ENCODE measurements at regions of chr3 and their contacts with region 1.

Region 1: DNA sequence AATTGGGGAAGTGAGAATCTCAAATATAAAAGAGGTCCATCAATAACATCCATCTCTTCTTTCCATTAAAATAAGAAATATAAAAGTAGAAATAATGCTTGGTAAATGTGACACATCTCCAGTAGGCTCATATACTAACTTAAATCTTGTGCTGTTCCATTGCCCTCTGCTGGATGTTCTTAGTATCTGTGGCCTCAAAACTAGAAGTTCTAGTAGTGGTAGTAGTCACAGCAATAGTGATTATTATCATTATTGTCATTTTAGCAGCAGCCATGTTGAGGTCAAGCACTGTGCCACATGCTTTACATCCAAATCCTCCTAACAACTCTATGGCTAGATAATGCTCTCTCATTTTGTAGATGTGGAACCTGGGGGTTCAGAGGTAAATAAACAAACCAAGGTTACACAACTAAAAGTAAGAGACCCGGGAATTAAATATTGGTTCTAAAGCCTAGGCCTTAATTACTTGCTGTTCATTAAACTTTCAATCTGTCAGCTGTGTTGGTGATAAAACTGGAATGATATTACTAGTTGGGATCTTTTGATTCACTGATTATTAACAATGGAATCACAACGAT is 20.2 kb upstream of the BTLA start:
- DNase-seq: no peak
- H3K4me3 Mint-ChIP-seq: no peak overlapping the region
- H3K27ac Mint-ChIP-seq: no peak overlapping the region
- H3K4me1 Mint-ChIP-seq: peaks cover 27% of the 10 kb centered on the region
- H3K27me3 Mint-ChIP-seq: no peaks in the 10 kb centered on the region

Region 2: GRCh38 chr3:112111785-112112402 is 407.6 kb before region 1 on chr3:
- intact Hi-C with region 1: loop called (anchors 5 kb)
- DNase-seq: peak; percentile 53
- H3K4me3 Mint-ChIP-seq: no peak overlapping the region
- H3K27ac Mint-ChIP-seq: no peak overlapping the region
- H3K4me1 Mint-ChIP-seq: peaks cover 10% of the 10 kb centered on the region
- H3K27me3 Mint-ChIP-seq: no peaks in the 10 kb centered on the region

Region 3: DNA sequence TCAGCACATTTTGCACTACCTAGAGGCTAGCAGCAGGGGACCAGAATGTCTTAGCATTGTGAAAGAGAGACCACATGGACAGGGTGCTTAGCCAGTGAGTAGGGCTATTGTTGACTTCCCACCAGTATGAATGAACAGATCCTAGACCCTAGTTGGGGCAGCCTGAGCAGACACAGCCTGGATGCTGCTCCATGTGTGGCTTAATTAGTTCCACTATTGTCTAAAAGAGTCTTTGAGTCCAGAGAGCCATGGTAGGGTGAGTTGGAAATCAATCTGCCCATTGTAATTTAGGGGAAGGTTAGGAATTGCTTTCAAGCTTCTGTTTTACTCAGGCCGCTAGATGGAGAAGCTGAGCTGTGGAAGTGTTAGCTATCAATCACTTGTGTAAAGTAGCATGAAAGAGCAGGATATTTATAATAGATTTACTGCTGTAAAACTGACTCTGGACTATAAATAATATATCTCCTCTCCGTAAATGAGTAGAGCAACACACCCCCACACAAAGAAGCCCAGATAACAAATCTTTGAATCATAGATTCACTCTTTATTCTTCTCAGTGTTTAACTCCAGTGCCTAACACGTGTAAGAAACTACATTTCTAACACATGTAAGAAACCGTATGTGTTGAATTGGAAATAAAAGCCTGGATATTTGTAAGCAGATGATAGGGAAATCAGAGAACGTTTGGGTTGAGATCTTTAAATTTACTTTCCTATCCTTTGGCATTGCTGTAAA is 382.4 kb before region 1 on chr3:
- intact Hi-C with region 1: loop called (anchors 5 kb)
- DNase-seq: no peak
- H3K4me3 Mint-ChIP-seq: no peak overlapping the region
- H3K27ac Mint-ChIP-seq: no peak overlapping the region
- H3K4me1 Mint-ChIP-seq: peaks cover 53% of the 10 kb centered on the region
- H3K27me3 Mint-ChIP-seq: no peaks in the 10 kb centered on the region

Region 4: GRCh38 chr3:112293368-112294321 is 225.9 kb before region 1 on chr3 and contains the start of gene SLC9C1:
- intact Hi-C with region 1: loop called (anchors 1 kb)
- DNase-seq: peak; percentile 28
- H3K4me3 Mint-ChIP-seq: peak within 1 kb of the TSS; percentile 70
- H3K27ac Mint-ChIP-seq: peak within 1 kb of the TSS; percentile 83
- H3K4me1 Mint-ChIP-seq: peaks cover 45% of the 10 kb centered on the region
- H3K27me3 Mint-ChIP-seq: no peaks in the 10 kb centered on the region
- total RNA-seq, gene SLC9C1: 0.37 TPM in 1 of 2 replicates, not detected in the other

Region 5: GRCh38 chr3:112327371-112327951 is 192.1 kb before region 1 on chr3:
- intact Hi-C with region 1: loop called (anchors 1 kb)
- DNase-seq: peak; percentile 28
- H3K4me3 Mint-ChIP-seq: no peak overlapping the region
- H3K27ac Mint-ChIP-seq: no peak overlapping the region
- H3K4me1 Mint-ChIP-seq: peaks cover 3% of the 10 kb centered on the region
- H3K27me3 Mint-ChIP-seq: peaks cover 2% of the 10 kb centered on the region

Region 6: GRCh38 chr3:112424394-112424793 is 95.1 kb before region 1 on chr3:
- intact Hi-C with region 1: no loop called
- DNase-seq: no peak
- H3K4me3 Mint-ChIP-seq: no peak overlapping the region
- H3K27ac Mint-ChIP-seq: no peak overlapping the region
- H3K4me1 Mint-ChIP-seq: no peaks in the 10 kb centered on the region
- H3K27me3 Mint-ChIP-seq: peaks cover 5% of the 10 kb centered on the region

Region 7: GRCh38 chr3:112489674-112490479 is 29.6 kb before region 1 on chr3:
- intact Hi-C with region 1: loop called (anchors 2 kb)
- DNase-seq: no peak
- H3K4me3 Mint-ChIP-seq: peak overlapping the region; percentile 70
- H3K27ac Mint-ChIP-seq: peak overlapping the region; percentile 92
- H3K4me1 Mint-ChIP-seq: peaks cover 59% of the 10 kb centered on the region
- H3K27me3 Mint-ChIP-seq: no peaks in the 10 kb centered on the region

Measured in activated T-helper 2 cell treated with anti-CD3 and anti-CD28 coated beads, Interferon-gamma antibody, Interleukin-2, Interleukin-4, amounts not matched to agents 10 μg/mL and 5 μg/mL and 100 μg/mL, durations not matched to agents 14 hours and 24 hours and 36 hours (primary cell).